ENCODE measurements at regions of chr6 and their contacts with region 1.

Region 1: GRCh38 chr6:7276199-7276524 is 36.8 kb downstream of the SSR1 start:
- DNase-seq: no peak
- ATAC-seq: no peak
- H3K4me3 Mint-ChIP-seq: no peak overlapping the region
- H3K27ac Mint-ChIP-seq: no peak overlapping the region
- H3K4me1 Mint-ChIP-seq: peaks cover 1% of the 10 kb centered on the region
- H3K27me3 Mint-ChIP-seq: no peaks in the 10 kb centered on the region

Region 2: DNA sequence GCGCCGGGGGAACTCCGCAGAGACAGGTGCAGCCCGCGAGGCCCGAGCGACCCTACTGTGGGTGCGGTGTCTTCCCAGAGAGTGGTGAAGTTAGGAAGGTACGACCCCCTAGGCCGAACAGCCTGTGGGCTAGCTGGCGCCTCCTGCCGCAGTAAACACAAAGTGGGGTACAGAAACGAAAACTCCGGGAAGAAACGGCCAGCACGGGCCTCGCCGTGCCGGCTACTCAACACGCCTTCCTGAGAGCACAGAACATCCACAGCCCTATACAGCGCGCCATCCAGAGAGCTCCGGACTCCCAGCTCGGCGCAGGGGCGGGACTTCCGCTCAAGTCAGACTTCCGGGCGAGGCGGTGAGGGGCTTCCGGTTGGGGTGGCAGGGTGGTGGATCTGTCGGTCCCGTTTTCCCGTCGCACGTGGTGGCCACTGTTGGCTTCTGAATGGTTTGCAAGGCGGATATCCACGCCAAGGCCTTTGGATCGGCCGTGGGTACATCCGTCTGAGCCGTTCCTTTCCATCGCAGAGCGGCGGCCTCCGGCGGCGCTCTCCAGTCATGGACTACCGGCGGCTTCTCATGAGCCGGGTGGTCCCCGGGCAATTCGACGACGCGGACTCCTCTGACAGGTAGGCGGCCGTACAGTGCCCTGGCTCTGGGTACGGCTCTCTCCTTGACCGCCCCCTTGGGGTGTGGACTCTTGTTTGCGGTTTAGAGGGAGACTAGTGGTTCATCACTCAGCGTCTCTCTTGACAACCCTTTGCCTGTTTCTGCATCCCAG is 113.5 kb after region 1 on chr6 and contains the starts of genes CAGE1 and RIOK1:
- CTCF ChIA-PET with region 1: interaction called, 12 read pairs
- POLR2A ChIA-PET with region 1: no interaction called
- DNase-seq: peak; percentile 96
- ATAC-seq: peak; percentile 96
- H3K4me3 Mint-ChIP-seq: peak within 1 kb of the TSS; percentile 79
- H3K27ac Mint-ChIP-seq: peak within 1 kb of the TSS; percentile 98
- H3K4me1 Mint-ChIP-seq: peaks cover 39% of the 10 kb centered on the region
- H3K27me3 Mint-ChIP-seq: no peaks in the 10 kb centered on the region
- total RNA-seq, gene CAGE1: 0.16 to 0.18 TPM
- total RNA-seq, gene RIOK1: 35.8 to 37.0 TPM

Region 3: DNA sequence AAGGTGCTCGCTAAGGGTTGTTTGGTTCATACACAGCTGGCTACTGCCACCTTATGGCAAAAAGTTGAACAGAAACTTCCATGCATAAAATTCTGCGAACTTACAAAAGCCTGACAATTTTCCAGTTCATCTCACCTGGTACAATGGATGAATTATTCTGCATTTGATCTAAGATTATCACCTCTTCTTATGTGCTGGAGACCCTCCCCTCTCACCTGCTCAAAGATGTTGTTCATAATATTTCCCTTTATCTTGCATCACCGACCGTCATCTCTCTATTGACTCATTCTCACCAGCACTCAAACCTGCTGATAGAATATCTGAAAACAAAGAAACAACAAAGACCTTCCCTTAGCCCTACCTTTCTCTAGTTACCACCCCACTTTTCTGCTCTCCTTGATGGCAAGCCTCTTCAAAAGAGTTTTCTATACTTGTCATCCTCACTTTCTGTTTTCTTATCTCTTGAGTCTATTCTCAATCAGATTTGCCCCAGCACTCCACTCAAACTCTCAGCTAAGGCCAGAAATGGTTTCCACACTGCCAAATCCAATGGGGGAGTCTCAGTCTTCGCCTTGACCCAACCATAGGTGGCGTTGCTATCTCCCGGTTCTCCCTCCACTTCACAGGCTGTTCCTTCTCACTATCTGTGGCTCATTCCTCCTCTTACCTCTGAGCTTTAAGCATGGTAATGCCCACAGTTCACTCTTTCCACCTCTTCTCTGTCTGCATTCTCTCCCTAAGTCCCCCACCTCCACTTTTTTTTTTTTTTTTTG is 339.6 kb after region 1 on chr6:
- CTCF ChIA-PET with region 1: interaction called, 67 read pairs
- POLR2A ChIA-PET with region 1: no interaction called
- DNase-seq: peak; percentile 54
- ATAC-seq: peak; percentile 30
- H3K4me3 Mint-ChIP-seq: no peak overlapping the region
- H3K27ac Mint-ChIP-seq: no peak overlapping the region
- H3K4me1 Mint-ChIP-seq: peaks cover 18% of the 10 kb centered on the region
- H3K27me3 Mint-ChIP-seq: no peaks in the 10 kb centered on the region

Measured in activated CD8-positive, alpha-beta T cell treated with anti-CD3 and anti-CD28 coated beads, Interleukin-2, amount 10 ng/mL, durations not matched to agents 7 days and 5 days (primary cell).